ENCODE measurements at regions of chrX and their contacts with region 1.

Region 1: GRCh38 chrX:129726307-129727111 is 12.3 kb upstream of the XPNPEP2 start:
- DNase-seq: peak; percentile 38
- H3K4me3 Mint-ChIP-seq: no peak overlapping the region
- H3K27ac Mint-ChIP-seq: peak overlapping the region; percentile 52
- H3K4me1 Mint-ChIP-seq: peaks cover 61% of the 10 kb centered on the region
- H3K27me3 Mint-ChIP-seq: no peaks in the 10 kb centered on the region

Region 2: DNA sequence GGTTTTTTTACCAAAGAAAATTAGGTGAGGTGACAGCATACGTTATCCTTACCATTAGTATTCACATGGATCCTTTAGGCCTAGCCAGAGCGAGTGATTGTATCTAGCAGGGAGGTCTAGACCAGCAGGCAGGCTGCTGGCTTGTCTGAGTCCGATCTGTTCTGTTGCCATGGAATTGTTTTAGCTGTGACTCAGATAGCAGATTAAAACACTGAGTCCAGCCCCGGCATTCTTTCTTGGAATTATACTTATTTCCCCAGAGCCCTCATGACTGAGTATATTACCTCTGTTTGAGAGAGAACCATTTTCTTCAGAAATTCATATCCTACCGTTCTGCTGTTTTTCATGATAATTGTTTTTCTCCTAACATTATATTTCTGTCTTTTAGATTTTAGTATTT is 149.0 kb before region 1 on chrX:
- CTCF ChIA-PET with region 1: no interaction called
- DNase-seq: no peak
- H3K4me3 Mint-ChIP-seq: no peak overlapping the region
- H3K27ac Mint-ChIP-seq: no peak overlapping the region
- H3K4me1 Mint-ChIP-seq: no peaks in the 10 kb centered on the region
- H3K27me3 Mint-ChIP-seq: no peaks in the 10 kb centered on the region

Region 3: DNA sequence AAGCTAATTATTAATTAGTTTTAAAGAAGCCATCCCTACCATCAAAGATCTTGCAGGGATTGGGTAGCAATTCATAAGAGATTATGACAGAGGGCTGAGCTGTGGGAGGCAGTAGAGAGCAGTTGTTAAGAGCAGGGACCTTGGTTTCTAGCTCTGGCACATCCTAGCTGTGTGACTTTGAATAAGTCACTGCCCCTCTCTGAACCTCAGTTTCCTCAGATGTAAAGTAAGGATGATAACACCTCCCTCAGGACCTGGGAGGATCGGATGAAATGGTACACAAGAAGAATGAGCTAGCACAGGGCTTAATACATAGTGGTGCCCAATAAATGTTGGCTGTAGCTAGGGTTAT is 117.1 kb before region 1 on chrX:
- CTCF ChIA-PET with region 1: interaction called, 21 read pairs
- DNase-seq: no peak
- H3K4me3 Mint-ChIP-seq: no peak overlapping the region
- H3K27ac Mint-ChIP-seq: no peak overlapping the region
- H3K4me1 Mint-ChIP-seq: peaks cover 25% of the 10 kb centered on the region
- H3K27me3 Mint-ChIP-seq: peaks cover 13% of the 10 kb centered on the region

Region 4: DNA sequence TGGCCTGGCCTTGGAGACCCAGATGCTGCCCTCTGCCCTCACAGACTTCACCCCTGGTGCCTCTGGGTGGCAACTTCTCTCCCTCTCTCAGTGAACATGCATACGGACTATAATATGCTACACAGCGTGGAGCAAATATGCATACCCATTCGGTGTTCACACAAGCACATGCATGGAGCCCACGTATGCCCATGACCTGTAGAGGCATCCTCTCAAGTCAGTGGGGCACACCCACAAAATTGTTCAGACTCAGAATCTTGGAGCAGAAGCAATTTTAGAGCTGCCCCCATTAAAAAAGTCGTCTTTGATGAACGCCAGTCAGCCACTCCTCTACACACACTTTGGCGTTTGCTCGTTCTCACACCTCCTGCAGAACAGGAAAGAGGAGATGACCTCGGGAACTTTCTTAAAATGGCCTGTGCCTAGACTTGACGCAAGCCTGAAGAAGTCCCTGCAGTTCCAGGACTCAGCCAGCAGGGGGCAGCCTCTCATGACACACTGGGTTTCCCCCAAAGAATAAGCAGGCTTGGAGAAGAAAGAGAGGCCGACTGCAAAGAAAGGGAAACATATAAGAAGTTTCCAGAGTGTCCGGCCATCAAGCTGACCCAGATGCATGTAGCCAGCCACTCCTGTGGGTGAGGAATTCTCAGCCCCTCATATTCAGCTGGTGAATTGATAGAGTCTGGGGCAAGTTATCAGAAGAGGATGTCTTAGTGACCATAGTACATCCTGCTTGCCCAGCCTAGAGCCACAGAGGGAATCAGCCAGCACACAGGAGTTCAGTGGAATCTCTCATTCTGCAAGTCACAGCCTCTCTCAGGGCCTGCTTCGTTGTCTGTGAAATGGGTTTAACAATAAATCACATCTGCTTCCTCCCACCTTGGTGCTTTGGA is 89.0 kb before region 1 on chrX:
- CTCF ChIA-PET with region 1: interaction called, 42 read pairs
- DNase-seq: peak; percentile 81
- H3K4me3 Mint-ChIP-seq: no peak overlapping the region
- H3K27ac Mint-ChIP-seq: no peak overlapping the region
- H3K4me1 Mint-ChIP-seq: peaks cover 7% of the 10 kb centered on the region
- H3K27me3 Mint-ChIP-seq: peaks cover 10% of the 10 kb centered on the region

Region 5: GRCh38 chrX:129654419-129655165 is 71.9 kb before region 1 on chrX and contains the start of gene APLN:
- CTCF ChIA-PET with region 1: interaction called, 24 read pairs
- DNase-seq: peak; percentile 48
- H3K4me3 Mint-ChIP-seq: peak within 1 kb of the TSS; percentile 66
- H3K27ac Mint-ChIP-seq: no peak within 1 kb of the TSS
- H3K4me1 Mint-ChIP-seq: peaks cover 14% of the 10 kb centered on the region
- H3K27me3 Mint-ChIP-seq: peaks cover 60% of the 10 kb centered on the region

Region 6: DNA sequence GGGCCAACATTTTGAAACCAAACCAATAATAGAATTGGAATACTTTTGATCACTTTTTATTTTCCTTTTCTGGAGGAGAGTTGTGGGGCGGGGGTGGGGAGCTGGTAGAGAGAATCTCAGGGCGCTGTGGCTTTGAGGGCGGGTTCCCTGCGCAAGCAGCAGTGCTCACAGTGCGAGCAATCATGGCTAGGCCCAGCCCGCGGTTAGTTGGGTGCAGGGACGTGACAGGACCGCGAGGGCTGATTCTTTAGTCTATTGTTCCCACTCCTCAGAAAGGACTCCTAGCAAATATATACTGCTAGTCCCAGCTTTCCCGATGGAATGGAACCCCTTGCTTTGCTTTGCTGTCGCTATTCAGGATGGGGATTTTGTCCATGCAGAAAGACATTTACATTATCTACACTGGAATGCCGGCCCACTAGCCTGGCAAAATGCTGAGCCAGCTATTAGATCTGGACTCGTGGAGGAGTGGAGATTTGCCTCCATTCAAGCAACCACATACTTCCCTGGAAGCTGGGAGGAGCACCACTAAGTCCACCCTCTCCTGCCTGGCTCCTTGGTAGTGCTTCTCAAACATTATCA is 47.8 kb before region 1 on chrX:
- CTCF ChIA-PET with region 1: interaction called, 10 read pairs
- DNase-seq: peak; percentile 46
- H3K4me3 Mint-ChIP-seq: peak overlapping the region; percentile 65
- H3K27ac Mint-ChIP-seq: peak overlapping the region; percentile 69
- H3K4me1 Mint-ChIP-seq: peaks cover 22% of the 10 kb centered on the region
- H3K27me3 Mint-ChIP-seq: peaks cover 15% of the 10 kb centered on the region

Region 7: GRCh38 chrX:129737916-129738315 is 11.4 kb after region 1 on chrX:
- CTCF ChIA-PET with region 1: interaction called, 30 read pairs
- DNase-seq: no peak
- H3K4me3 Mint-ChIP-seq: no peak overlapping the region
- H3K27ac Mint-ChIP-seq: peak overlapping the region; percentile 52
- H3K4me1 Mint-ChIP-seq: peaks cover 61% of the 10 kb centered on the region
- H3K27me3 Mint-ChIP-seq: no peaks in the 10 kb centered on the region

Region 8: GRCh38 chrX:129900054-129900453 is 173.5 kb after region 1 on chrX:
- CTCF ChIA-PET with region 1: no interaction called
- DNase-seq: no peak
- H3K4me3 Mint-ChIP-seq: no peak overlapping the region
- H3K27ac Mint-ChIP-seq: no peak overlapping the region
- H3K4me1 Mint-ChIP-seq: no peaks in the 10 kb centered on the region
- H3K27me3 Mint-ChIP-seq: no peaks in the 10 kb centered on the region

Region 9: DNA sequence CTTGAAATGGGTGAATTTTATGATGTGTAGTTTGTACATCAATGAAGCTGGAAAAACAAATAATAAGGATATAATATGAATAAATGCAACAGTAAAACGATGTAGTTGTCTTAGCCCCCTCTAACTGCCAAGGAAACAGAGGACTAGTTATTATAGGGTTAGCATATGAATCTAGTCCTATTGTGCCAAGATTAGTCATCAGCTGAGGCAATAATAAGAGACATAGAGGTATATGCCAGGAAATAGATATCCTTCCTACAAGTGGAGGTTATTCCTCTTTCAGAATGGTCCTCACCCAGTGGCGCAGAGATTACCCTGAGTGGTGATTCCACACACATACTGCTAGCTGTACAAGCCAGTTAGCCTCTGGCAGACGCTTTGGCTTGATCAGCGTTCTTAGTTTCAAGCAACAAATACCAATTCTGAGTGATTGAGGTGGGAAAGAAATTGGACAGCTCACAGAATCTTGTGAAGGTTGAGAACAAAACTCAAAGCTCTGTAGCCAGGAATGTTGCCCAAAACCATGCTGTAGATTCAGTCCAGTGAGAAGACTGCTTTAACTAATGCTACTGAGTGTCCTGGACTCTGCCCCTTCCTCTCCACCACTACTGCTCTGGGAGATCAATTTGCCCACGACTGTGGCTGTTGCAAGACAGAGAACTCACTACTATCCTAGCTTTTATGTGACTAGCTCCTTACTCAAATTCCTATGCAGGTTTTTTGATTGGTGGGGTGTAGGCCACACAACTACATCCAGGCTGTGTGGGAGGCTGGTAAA is 569.2 kb after region 1 on chrX:
- CTCF ChIA-PET with region 1: no interaction called
- DNase-seq: no peak
- H3K4me3 Mint-ChIP-seq: no peak overlapping the region
- H3K27ac Mint-ChIP-seq: no peak overlapping the region
- H3K4me1 Mint-ChIP-seq: no peaks in the 10 kb centered on the region
- H3K27me3 Mint-ChIP-seq: peaks cover 13% of the 10 kb centered on the region